Heart right ventricle (tissue), 16 donors: ENCODE measurements at regions of chr1 and their contacts with region 1.

Region 1: DNA sequence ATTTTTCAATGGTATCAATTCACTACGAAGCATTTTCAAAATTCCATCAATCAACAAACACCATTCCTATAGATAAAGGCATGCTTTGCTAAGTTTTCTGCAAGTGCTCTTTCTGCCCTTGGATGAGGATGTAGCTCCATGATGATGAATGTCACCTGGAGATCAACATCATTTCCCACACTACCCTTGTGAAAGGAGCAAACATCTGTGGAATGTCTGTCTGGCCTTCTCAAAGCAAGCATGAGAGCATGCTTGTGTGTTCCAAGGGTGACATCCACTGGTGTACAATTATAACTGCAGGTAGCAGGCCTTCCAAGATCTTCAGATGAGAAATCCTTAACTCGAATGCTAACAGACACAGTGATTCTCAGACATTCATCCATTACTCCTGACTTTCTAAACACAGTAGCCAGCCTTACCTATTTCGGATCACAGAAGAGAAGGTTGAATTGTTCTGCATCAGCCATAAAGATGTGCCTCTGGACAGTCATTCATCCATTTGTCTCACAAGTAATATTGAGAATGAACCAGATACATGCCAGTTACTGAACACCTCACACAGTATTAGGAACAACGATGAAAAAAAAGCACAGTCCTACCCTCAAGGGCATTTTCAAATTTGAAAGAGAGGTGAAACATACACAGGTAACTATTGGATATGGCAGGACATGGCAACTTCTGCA is 162.4 kb downstream of the TPR start:
- DNase-seq: peak in 1 of 2 donors; percentile 57
- ATAC-seq: peak; percentile 80 to 94 (median 90)
- H3K4me3 ChIP-seq: no peak overlapping the region
- H3K27ac ChIP-seq: no peak overlapping the region
- H3K4me1 ChIP-seq: peaks cover 0 to 6% (median 3%) of the 10 kb centered on the region in 9 donors
- H3K27me3 ChIP-seq: no peaks in the 10 kb centered on the region
- CTCF ChIP-seq: peak; percentile 66 to 92 (median 86)

Region 2: GRCh38 chr1:185720633-185721272 is 491.9 kb before region 1 on chr1:
- intact Hi-C with region 1: loop called in 9 of 10 experiments (anchors 1 to 5 kb)
- DNase-seq: peak in 1 of 2 donors; percentile 34
- ATAC-seq: peak in 5 of 8 donors; percentile 54 to 84 (median 67)
- H3K4me3 ChIP-seq: no peak overlapping the region
- H3K27ac ChIP-seq: peak overlapping the region in 2 of 10 donors; percentile 19 to 23
- H3K4me1 ChIP-seq: peaks cover 0 to 21% (median 5%) of the 10 kb centered on the region in 9 donors
- H3K27me3 ChIP-seq: no peaks in the 10 kb centered on the region
- CTCF ChIP-seq: peak in 8 of 9 donors; percentile 54 to 80 (median 68)

Region 3: DNA sequence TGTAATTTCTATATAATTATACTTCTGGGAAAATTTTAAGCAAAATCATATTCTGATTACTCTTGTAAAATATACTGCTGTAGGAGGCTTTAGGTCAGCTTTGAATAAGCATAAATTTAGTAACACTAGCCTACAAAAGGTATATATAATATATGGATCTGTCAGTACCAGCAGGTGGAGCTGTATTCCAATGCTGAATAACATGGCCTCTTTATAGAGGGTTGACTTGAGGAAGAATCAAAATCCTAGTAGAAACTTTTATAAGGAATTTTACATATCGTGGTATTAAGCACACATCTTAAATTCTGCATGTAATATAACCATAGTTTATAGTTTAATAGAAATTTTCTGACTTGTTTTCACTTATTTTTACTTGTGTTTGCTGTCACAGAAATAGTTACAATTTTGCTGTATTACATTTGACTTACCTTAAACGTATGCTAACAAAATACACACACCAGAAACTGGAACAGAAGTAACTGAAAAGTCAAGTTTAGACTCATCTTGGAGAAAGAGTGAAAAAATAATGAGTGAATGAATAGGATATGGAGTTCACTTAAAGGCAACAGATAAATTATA is 399.2 kb before region 1 on chr1:
- intact Hi-C with region 1: loop called in 7 of 10 experiments (anchors 2 to 5 kb)
- DNase-seq: peak in 1 of 2 donors; percentile 13
- ATAC-seq: no peak
- H3K4me3 ChIP-seq: no peak overlapping the region
- H3K27ac ChIP-seq: no peak overlapping the region
- H3K4me1 ChIP-seq: peaks cover 0 to 5% (median 0%) of the 10 kb centered on the region in 9 donors
- H3K27me3 ChIP-seq: no peaks in the 10 kb centered on the region
- CTCF ChIP-seq: peak in 8 of 9 donors; percentile 19 to 76 (median 56)

Region 4: DNA sequence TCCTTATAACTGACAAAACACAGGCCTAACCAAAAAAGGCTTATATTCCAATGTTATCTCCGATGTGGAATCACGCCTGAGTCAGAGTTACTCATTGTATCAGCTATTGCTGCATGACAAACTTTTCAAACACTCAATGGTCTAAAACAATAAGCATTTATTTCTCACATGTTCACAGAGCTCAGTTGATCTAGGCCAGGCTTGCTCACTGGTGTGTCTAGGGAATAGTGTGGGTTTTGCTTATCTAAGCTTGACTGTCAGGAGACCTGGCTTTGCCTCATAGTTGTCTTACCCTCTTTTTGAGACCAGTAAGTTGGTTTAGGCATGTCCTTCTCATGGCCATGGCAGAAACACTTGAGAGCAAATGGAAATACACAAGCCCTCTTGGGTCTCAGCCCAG is 347.8 kb before region 1 on chr1:
- intact Hi-C with region 1: loop called in 1 of 10 experiments (anchors 5 kb)
- DNase-seq: no peak
- ATAC-seq: peak in 3 of 8 donors; percentile 40 to 90 (median 40)
- H3K4me3 ChIP-seq: no peak overlapping the region
- H3K27ac ChIP-seq: no peak overlapping the region
- H3K4me1 ChIP-seq: peaks cover 0 to 8% (median 0%) of the 10 kb centered on the region in 9 donors
- H3K27me3 ChIP-seq: no peaks in the 10 kb centered on the region
- CTCF ChIP-seq: no peak

Region 5: DNA sequence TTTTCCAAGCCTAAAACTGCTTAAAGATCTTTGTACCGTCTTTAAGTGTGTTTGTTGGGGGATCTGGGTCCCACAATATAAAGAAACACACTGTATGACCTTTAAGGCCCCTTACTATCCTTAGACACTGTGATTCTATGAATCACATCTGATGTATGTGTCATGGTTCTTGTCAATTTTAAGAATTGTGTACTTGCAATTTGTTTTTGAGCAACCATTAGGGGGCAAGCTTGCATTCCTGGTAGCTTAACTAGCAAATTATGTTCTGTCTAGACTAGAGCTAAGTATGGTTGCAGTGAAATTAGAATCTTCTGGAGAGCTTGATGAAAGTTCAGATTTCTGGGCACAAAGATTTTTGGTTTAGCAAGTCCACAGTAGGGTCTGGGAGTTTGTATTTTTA is 57.1 kb before region 1 on chr1:
- intact Hi-C with region 1: loop called in 2 of 10 experiments (anchors 1 to 2 kb)
- DNase-seq: peak in 1 of 2 donors; percentile 9
- ATAC-seq: peak in 1 of 8 donors; percentile 41
- H3K4me3 ChIP-seq: no peak overlapping the region
- H3K27ac ChIP-seq: no peak overlapping the region
- H3K4me1 ChIP-seq: peaks cover 0 to 5% (median 0%) of the 10 kb centered on the region in 9 donors
- H3K27me3 ChIP-seq: no peaks in the 10 kb centered on the region
- CTCF ChIP-seq: peak in 8 of 9 donors; percentile 29 to 52 (median 48)

Region 6: GRCh38 chr1:186337554-186337953 is 124.9 kb after region 1 on chr1:
- intact Hi-C with region 1: no loop called
- DNase-seq: no peak
- ATAC-seq: no peak
- H3K4me3 ChIP-seq: no peak overlapping the region
- H3K27ac ChIP-seq: no peak overlapping the region
- H3K4me1 ChIP-seq: no peaks in the 10 kb centered on the region
- H3K27me3 ChIP-seq: no peaks in the 10 kb centered on the region
- CTCF ChIP-seq: no peak